Naive thymus-derived CD8-positive, alpha-beta T cell (primary cell): ENCODE measurements at regions of chr9 and their contacts with region 1.

Region 1: DNA sequence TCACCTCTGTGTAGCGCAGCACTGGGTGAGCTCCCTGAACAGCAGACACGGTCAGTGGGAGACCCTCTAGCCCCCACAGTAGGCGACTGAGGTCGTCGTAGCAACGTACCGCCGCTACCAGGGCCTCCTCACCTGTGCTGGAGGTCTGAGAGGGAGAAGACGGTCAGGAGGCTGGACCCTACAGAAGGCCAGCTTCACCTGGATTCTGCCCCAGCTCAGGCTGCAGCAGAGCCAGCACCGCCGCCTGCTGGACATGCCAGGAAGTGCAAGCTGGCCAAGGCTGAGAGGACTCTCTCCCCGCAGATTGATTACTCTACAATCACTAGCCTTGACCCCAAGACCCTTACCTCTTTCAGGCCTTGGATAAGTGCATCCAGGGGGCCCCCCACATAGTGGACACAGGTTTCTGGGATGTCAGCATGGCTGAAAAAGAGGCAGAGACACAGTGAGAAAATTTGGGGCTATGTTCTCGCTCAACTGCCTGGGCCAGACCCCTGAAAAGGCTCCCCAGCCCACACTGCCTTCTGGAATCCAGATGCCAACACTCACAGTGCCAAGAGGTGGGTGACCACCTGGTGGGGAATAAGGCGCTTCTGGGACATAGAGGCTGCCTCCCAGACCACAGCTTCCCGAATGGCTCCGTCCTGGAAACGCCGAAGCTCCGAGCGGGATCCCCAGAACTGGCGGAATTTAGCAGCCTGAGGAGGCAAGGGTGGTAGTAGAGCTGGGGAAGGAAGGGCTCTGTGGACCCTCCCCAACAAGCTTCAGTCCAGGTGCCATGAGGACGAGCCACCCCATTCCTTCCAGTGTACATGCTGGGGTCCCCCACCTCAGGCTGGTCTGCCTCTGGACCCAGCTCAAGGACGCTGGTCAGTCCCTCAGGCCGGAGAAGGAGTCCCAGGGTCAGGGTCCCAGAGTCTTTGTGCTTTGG is 6.9 kb downstream of the NOL6 start:
- DNase-seq: peak; percentile 34 to 81 (median 70)
- ATAC-seq: peak; percentile 80 to 88
- H3K4me3 Mint-ChIP-seq: no peak overlapping the region
- H3K27ac Mint-ChIP-seq: peak overlapping the region; percentile 19 to 82 (median 57)
- H3K4me1 Mint-ChIP-seq: peaks cover 6 to 18% (median 8%) of the 10 kb centered on the region in 4 donors
- H3K27me3 Mint-ChIP-seq: no peaks in the 10 kb centered on the region

Region 2: GRCh38 chr9:33404788-33405362 is 62.0 kb before region 1 on chr9:
- POLR2A ChIA-PET with region 1: interaction called, 10 read pairs
- DNase-seq: no peak
- ATAC-seq: no peak
- H3K4me3 Mint-ChIP-seq: no peak overlapping the region
- H3K27ac Mint-ChIP-seq: peak overlapping the region in 9 of 10 donors; percentile 32 to 88 (median 60)
- H3K4me1 Mint-ChIP-seq: peaks cover 3 to 8% (median 4%) of the 10 kb centered on the region in 4 donors
- H3K27me3 Mint-ChIP-seq: no peaks in the 10 kb centered on the region

Region 3: GRCh38 chr9:34139477-34140146 is 672.8 kb after region 1 on chr9:
- POLR2A ChIA-PET with region 1: no interaction called
- DNase-seq: no peak
- ATAC-seq: no peak
- H3K4me3 Mint-ChIP-seq: no peak overlapping the region
- H3K27ac Mint-ChIP-seq: peak overlapping the region in 1 of 10 donors; percentile 32
- H3K4me1 Mint-ChIP-seq: peaks cover 0 to 8% (median 5%) of the 10 kb centered on the region in 4 donors
- H3K27me3 Mint-ChIP-seq: peaks cover 0 to 3% (median 0%) of the 10 kb centered on the region in 5 donors